Activated T-helper 1 cell treated with anti-CD3 and anti-CD28 coated beads, Interleukin-12 subunit alpha, Interleukin-12 subunit beta, Interleukin-2, Interleukin-4 antibody, amounts not matched to agents 30 ng/mL and 10 ng/mL and 1 ng/mL, durations not matched to agents 14 hours and 24 hours and 36 hours (primary cell): ENCODE measurements at regions of chr22 and their contacts with region 1.

Region 1: GRCh38 chr22:44460691-44461375 is 37.2 kb downstream of the RTL6 start:
- DNase-seq: no peak
- H3K4me3 Mint-ChIP-seq: peak overlapping the region; percentile 3
- H3K27ac Mint-ChIP-seq: peak overlapping the region; percentile 87
- H3K4me1 Mint-ChIP-seq: peaks cover 24% of the 10 kb centered on the region
- H3K27me3 Mint-ChIP-seq: peaks cover 4% of the 10 kb centered on the region

Region 2: GRCh38 chr22:44491269-44492035 is 30.6 kb after region 1 on chr22:
- intact Hi-C with region 1: loop called (anchors 1 kb)
- DNase-seq: no peak
- H3K4me3 Mint-ChIP-seq: no peak overlapping the region
- H3K27ac Mint-ChIP-seq: no peak overlapping the region
- H3K4me1 Mint-ChIP-seq: peaks cover 18% of the 10 kb centered on the region
- H3K27me3 Mint-ChIP-seq: no peaks in the 10 kb centered on the region